AG04450 (cell line): ENCODE measurements at regions of chr6 and their contacts with region 1.

Region 1: GRCh38 chr6:97437087-97437486 is 154.1 kb upstream of the MMS22L start:
- DNase-seq: no peak
- H3K4me3 ChIP-seq: no peak overlapping the region
- H3K27ac ChIP-seq: no peak overlapping the region
- H3K27me3 ChIP-seq: no peaks in the 10 kb centered on the region
- CTCF ChIP-seq: peak; percentile 95

Region 2: DNA sequence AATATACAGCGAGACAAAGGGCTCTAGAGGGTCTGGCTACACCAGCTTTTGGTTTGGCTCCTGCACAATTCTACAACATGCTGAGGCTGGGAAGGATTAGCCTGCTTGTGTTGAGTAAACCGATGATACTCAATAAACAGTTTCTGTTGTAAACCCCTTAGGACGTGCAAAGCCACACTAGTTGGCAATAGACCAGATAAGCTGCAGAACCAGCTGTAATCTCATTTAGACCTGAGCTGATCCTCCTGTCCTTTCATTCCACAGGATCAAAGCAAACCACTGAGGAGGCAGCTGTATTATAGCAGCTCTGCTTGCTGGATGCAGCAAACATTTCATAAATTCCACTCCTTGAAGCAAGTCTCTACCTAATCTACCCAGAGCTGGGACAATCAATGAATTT is 233.7 kb before region 1 on chr6:
- CTCF ChIA-PET with region 1: interaction called, 12 read pairs
- POLR2A ChIA-PET with region 1: no interaction called
- DNase-seq: peak; percentile 65
- H3K4me3 ChIP-seq: no peak overlapping the region
- H3K27ac ChIP-seq: no peak overlapping the region
- H3K27me3 ChIP-seq: no peaks in the 10 kb centered on the region
- CTCF ChIP-seq: no peak